Mammary epithelial cell (primary cell): ENCODE measurements at regions of chr7 and their contacts with region 1.

Region 1: GRCh38 chr7:143914938-143915652 is 13.1 kb upstream of the TCAF1 start:
- DNase-seq: no peak
- H3K4me3 ChIP-seq: no peak overlapping the region
- H3K27ac ChIP-seq: no peak overlapping the region
- H3K4me1 ChIP-seq: peaks cover 6% of the 10 kb centered on the region
- H3K27me3 ChIP-seq: no peaks in the 10 kb centered on the region
- CTCF ChIP-seq: peak in 1 of 2 donors; percentile 9

Region 2: GRCh38 chr7:143953421-143953820 is 38.3 kb after region 1 on chr7:
- CTCF ChIA-PET with region 1: no interaction called
- dilution Hi-C with region 1: no loop called
- in situ Hi-C with region 1: no loop called
- intact Hi-C with region 1: loop called (anchors 1 kb)
- DNase-seq: no peak
- H3K4me3 ChIP-seq: no peak overlapping the region
- H3K27ac ChIP-seq: no peak overlapping the region
- H3K4me1 ChIP-seq: no peaks in the 10 kb centered on the region
- H3K27me3 ChIP-seq: no peaks in the 10 kb centered on the region
- CTCF ChIP-seq: no peak

Region 3: GRCh38 chr7:143965280-143965679 is 50.2 kb after region 1 on chr7:
- CTCF ChIA-PET with region 1: no interaction called
- dilution Hi-C with region 1: no loop called
- in situ Hi-C with region 1: no loop called
- intact Hi-C with region 1: no loop called
- DNase-seq: no peak
- H3K4me3 ChIP-seq: no peak overlapping the region
- H3K27ac ChIP-seq: no peak overlapping the region
- H3K4me1 ChIP-seq: no peaks in the 10 kb centered on the region
- H3K27me3 ChIP-seq: no peaks in the 10 kb centered on the region
- CTCF ChIP-seq: no peak